ENCODE measurements at regions of chr10 and their contacts with region 1.

Region 1: GRCh38 chr10:90598513-90598912 is 259.3 kb downstream of the HTR7 start:
- DNase-seq: no peak
- ATAC-seq: no peak
- H3K4me3 ChIP-seq: no peak overlapping the region
- H3K27ac ChIP-seq: no peak overlapping the region
- H3K4me1 ChIP-seq: no peaks in the 10 kb centered on the region
- H3K27me3 ChIP-seq: peaks cover 0 to 4% (median 0%) of the 10 kb centered on the region in 7 donors
- CTCF ChIP-seq: no peak

Region 2: DNA sequence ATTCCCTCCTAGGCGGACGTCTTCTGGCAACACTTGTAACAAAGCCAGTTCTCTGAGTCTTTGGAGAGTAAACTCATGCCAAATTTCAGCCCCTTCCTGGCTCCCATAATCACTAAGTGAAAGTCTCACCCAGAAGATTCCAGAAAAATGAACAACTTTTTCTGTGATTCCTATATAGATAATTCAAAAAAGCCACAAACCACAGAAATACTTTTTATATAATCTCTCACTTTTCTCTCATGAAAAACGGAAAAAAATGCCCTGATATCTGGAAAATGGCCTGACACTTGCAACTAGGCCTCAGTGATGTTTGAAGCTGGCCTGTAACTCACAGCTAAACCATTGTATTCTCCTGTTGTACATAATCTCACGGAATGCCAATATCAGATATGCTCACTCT is 36.8 kb before region 1 on chr10:
- intact Hi-C with region 1: no loop called
- DNase-seq: no peak
- ATAC-seq: no peak
- H3K4me3 ChIP-seq: no peak overlapping the region
- H3K27ac ChIP-seq: no peak overlapping the region
- H3K4me1 ChIP-seq: no peaks in the 10 kb centered on the region
- H3K27me3 ChIP-seq: no peaks in the 10 kb centered on the region
- CTCF ChIP-seq: no peak

Region 3: GRCh38 chr10:90641731-90642130 is 43.2 kb after region 1 on chr10:
- intact Hi-C with region 1: loop called in 1 of 10 experiments (anchors 2 kb)
- DNase-seq: no peak
- ATAC-seq: peak in 2 of 8 donors; percentile 49 to 57
- H3K4me3 ChIP-seq: no peak overlapping the region
- H3K27ac ChIP-seq: peak overlapping the region in 1 of 10 donors; percentile 18
- H3K4me1 ChIP-seq: peaks cover 3 to 21% (median 12%) of the 10 kb centered on the region in 9 donors
- H3K27me3 ChIP-seq: no peaks in the 10 kb centered on the region
- CTCF ChIP-seq: no peak

Region 4: DNA sequence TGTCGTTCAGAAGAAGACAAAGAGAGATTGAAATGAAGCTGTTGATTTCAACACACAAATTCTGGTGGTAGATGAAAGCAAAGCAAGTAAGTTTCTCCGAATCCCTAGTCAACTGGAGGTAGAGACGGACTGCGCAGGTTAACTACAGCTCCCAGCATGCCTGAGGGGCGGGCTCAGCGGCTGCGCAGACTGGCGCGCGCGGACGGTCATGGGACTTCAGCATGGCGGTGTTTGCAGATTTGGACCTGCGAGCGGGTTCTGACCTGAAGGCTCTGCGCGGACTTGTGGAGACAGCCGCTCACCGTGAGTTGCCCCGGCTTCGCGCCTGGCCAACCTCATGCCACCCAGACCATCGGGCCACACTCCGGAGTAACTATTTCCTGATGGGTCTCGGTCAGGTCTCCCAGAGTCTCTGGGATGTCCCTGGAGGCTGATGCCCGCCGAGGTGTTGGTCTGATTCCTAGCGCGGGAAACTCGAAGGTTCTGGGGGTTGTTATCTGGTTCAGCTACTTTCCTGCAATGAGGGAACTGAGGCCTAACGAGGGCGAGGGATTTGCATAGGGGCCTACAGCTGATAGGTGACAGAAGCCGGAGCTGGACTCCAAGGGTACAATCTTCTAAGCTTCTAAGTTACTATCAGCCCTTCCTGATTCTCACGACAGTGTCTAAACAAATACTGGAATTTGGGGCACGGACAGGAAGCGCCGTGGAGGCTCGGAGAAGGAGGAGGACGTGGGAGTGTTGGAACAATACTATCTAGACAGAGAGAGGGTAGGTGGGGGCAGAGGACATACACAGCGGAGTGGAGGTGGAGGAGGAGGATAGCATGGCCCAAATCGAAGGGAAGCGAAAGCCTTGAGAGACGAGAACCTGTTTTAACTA is 273.5 kb after region 1 on chr10 and contains the start of gene RPP30:
- intact Hi-C with region 1: no loop called
- DNase-seq: peak; percentile 83
- ATAC-seq: peak; percentile 98 to 99 (median 99)
- H3K4me3 ChIP-seq: peak within 1 kb of the TSS; percentile 47 to 92 (median 74)
- H3K27ac ChIP-seq: peak within 1 kb of the TSS in 9 of 10 donors; percentile 13 to 79 (median 62)
- H3K4me1 ChIP-seq: peaks cover 0 to 31% (median 18%) of the 10 kb centered on the region in 9 donors
- H3K27me3 ChIP-seq: peaks cover 0 to 8% (median 3%) of the 10 kb centered on the region in 7 donors
- CTCF ChIP-seq: no peak
- total RNA-seq, gene RPP30: 27.9 to 40.4 (median 33.3) TPM

Measured in heart right ventricle (tissue), 16 donors.